Left ventricle myocardium superior (tissue), 1 donor: ENCODE measurements at regions of chr17 and their contacts with region 1.

Region 1: GRCh38 chr17:42087736-42088705 is 10.3 kb downstream of the ZNF385C start:
- DNase-seq: no peak
- ATAC-seq: no peak

Region 2: DNA sequence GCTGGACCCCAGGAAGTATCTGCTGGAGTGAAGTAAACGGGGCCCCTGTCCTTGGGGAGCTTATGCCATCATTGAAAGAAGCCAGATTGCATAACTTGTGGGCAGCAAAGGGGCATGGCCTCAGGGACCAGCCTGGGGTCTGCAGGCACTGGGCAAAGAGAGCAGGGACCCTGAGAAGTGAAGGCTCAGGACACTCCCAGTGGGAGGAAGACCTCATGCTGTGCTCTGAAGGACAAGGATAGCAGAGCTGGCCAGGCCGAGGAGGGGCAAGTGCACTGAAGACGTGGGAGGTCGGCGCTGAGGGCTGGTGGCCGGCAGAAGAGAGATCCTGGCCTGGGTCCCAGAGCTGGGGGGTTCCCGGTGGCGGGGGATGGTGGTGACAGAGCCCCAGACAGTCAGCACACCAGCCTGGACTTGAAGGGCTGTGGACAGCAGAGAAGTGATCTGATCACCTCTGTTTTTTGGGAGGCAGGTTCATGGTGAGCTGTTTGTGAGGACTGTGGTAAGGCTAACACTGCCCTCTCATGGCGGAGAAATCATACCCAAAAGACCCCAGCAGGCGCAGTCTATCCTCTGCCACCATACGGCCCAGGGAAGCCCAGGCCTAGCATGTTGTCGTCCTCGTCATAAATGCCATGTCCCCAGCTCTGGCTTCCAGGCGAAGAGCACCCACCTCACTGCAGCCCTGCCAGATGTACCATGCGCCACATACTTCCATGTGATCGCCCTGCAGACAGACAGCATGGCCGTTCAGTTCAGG is 128.5 kb before region 1 on chr17:
- intact Hi-C with region 1: loop called (anchors 10 kb)
- DNase-seq: no peak
- ATAC-seq: peak; percentile 55

Region 3: DNA sequence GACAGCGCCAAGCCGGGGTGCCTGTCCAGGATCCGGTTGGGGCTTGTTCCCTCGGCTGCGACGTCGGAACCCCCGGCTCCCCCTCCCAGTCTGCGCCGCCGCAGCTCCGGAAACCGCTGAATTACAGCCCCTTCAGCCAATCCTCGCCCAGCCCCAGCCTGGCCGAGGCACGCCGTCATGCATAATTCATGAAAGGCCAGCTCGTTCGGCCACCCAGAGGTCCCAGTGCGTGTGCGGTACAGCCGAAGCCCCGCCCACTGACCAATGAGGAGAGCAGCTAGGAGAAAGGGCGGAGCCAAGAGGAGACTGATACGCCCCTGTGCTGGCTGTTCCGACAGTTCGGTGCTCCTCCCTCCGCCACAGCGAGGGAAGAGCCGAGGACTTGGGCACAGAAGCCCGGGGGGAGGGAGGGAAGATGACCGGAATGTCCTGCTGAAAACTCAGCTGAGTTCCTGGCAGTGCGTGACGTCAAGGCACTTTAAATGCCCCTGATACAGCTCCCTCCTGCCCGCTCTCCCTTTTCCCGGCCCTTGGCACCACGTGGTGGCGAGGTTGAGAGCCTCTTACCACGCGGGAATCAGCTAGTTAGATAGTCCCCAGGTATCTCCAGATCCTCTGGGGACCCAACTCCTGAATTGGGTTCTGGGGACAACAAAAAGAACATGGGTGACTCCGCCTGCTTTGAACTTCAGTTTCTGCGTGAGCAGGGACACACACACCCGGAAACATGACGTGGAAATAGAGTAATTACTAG is 300.5 kb after region 1 on chr17 and contains the start of gene STAT3:
- intact Hi-C with region 1: no loop called
- DNase-seq: peak; percentile 100
- ATAC-seq: peak; percentile 96
- total RNA-seq, gene STAT3: 146 TPM